ENCODE measurements at regions of chr15 and their contacts with region 1.

Region 1: DNA sequence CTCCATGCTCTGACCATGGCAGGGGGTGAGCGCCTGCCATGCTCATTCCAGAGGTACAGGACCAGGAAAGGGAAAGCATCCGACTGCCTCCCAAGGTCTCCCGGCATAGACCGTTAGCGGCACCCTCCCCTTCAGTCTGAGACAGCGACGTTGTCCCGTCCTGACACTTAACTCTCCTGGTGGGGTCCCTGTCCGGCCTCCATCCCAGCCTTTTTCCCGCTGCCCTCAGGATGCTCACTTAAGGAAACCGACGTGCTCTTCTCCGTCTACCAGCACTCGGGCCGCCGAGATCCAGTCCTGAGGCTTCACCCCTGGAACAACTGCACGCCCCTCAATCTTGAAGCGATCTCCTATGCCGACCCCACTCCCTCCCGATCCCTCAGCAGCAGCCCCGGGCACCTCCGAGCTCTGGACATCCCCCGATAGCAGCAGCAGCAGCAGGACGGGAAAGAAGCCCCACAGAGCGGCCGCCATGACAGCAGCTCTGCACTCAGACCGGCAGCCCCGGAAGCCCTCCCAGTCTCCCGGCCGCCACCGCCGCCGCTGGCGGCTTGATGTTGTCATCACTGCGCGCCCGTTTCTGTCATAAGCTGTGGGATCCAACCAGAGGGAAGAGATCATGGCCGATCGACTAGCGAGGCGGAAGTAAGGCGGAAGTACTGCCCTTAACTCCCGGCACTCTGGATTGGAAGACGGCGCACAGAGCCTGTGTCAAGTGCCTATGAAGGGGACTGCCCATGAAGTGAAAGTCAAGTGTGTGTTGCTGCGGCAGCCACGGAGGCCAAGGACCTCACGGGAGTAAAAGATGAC is at the starts of genes EMC7 and PGBD4:
- DNase-seq: peak; percentile 94 to 100 (median 99)
- ATAC-seq: peak; percentile 97 to 98
- H3K4me3 Mint-ChIP-seq: peak within 1 kb of the TSS; percentile 93 to 100 (median 99)
- H3K27ac Mint-ChIP-seq: peak within 1 kb of the TSS; percentile 96 to 100 (median 98)
- H3K4me1 Mint-ChIP-seq: peaks cover 11 to 55% (median 40%) of the 10 kb centered on the region in 4 donors
- H3K27me3 Mint-ChIP-seq: no peaks in the 10 kb centered on the region
- polyA plus RNA-seq, gene EMC7: 88.0 to 116 (median 91.5) TPM
- polyA plus RNA-seq, gene PGBD4: 1.1 to 1.9 (median 1.4) TPM

Region 2: GRCh38 chr15:34038023-34038870 is 63.3 kb before region 1 on chr15:
- POLR2A ChIA-PET with region 1: interaction called, 19 read pairs
- DNase-seq: peak in 9 of 10 donors; percentile 52 to 80 (median 65)
- ATAC-seq: peak; percentile 82 to 83
- H3K4me3 Mint-ChIP-seq: peak overlapping the region; percentile 89 to 98 (median 94)
- H3K27ac Mint-ChIP-seq: peak overlapping the region; percentile 71 to 98 (median 95)
- H3K4me1 Mint-ChIP-seq: peaks cover 11 to 21% (median 18%) of the 10 kb centered on the region in 4 donors
- H3K27me3 Mint-ChIP-seq: no peaks in the 10 kb centered on the region

Region 3: DNA sequence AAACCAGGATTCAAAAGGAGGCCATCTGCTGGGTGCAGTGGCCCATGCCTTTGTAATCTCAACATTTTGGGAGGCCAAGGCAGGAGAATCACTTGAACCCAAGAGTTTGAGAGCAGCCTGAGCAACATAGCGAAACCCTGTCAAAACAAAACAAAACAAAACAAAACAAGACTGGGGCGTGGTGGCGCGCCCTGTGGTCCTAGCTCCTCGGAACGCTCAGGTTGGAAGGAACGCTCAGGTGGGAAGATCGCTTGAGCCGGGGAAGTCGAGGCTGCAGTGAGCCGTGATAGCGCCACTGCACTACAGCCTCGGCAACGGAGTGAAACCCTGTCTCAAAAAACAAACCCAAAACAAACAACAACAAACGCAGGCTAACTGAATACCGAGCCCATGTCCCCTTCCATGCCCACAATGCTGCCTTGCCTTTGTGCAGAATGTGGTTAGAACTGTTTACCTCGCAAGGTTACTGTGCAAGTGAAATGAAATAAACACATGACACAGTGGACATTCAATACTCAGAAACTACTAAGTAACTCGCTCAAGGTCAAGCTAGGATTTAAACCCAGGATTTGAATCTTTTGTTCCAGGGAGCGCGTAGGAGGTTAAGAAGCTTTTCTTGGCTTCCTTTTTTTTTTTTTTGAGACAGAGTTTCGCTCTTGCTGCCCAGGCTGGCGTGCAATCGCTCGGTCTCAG is 122.5 kb after region 1 on chr15:
- POLR2A ChIA-PET with region 1: interaction called, 32 read pairs
- DNase-seq: no peak
- ATAC-seq: no peak
- H3K4me3 Mint-ChIP-seq: peak overlapping the region; percentile 88 to 100 (median 96)
- H3K27ac Mint-ChIP-seq: peak overlapping the region; percentile 82 to 100 (median 99)
- H3K4me1 Mint-ChIP-seq: peaks cover 19 to 29% (median 25%) of the 10 kb centered on the region in 4 donors
- H3K27me3 Mint-ChIP-seq: peaks cover 0 to 3% (median 0%) of the 10 kb centered on the region in 5 donors

Region 4: DNA sequence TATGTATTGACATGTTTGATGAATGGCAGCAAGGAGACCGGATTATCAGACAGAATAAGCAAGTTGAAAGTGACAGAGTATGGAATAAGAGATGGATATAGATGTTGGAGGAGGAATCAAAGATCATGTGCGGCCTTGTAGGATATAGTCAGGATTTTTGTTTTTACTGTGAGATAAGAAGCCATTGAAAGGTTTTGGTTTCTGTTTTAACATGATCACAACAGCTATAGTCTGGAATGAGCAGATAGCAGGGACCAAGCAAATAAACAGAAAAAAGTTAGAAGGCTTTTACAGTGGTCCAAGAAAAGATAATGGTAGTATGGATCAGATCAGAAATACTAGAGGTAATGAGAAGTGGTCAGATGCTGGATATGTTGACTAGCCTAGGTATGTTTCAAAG is 183.4 kb after region 1 on chr15:
- POLR2A ChIA-PET with region 1: no interaction called
- DNase-seq: no peak
- ATAC-seq: no peak
- H3K4me3 Mint-ChIP-seq: peak overlapping the region in 6 of 10 donors; percentile 1 to 39 (median 11)
- H3K27ac Mint-ChIP-seq: peak overlapping the region; percentile 27 to 85 (median 66)
- H3K4me1 Mint-ChIP-seq: peaks cover 23 to 54% (median 31%) of the 10 kb centered on the region in 4 donors
- H3K27me3 Mint-ChIP-seq: no peaks in the 10 kb centered on the region

Measured in naive thymus-derived CD8-positive, alpha-beta T cell (primary cell).